A673 (cell line): ENCODE measurements at regions of chr5 and their contacts with region 1.

Region 1: GRCh38 chr5:9361835-9362234 is 184.0 kb downstream of the SEMA5A start:
- DNase-seq: peak; percentile 65
- H3K4me3 ChIP-seq: no peak overlapping the region
- H3K27ac ChIP-seq: no peak overlapping the region
- H3K4me1 ChIP-seq: no peaks in the 10 kb centered on the region
- H3K27me3 ChIP-seq: no peaks in the 10 kb centered on the region
- CTCF ChIP-seq: peak; percentile 83

Region 2: GRCh38 chr5:8729437-8729836 is 632.4 kb before region 1 on chr5:
- CTCF ChIA-PET with region 1: no interaction called
- POLR2A ChIA-PET with region 1: no interaction called
- intact Hi-C with region 1: no loop called
- DNase-seq: no peak
- H3K4me3 ChIP-seq: no peak overlapping the region
- H3K27ac ChIP-seq: no peak overlapping the region
- H3K4me1 ChIP-seq: no peaks in the 10 kb centered on the region
- H3K27me3 ChIP-seq: no peaks in the 10 kb centered on the region
- CTCF ChIP-seq: no peak

Region 3: DNA sequence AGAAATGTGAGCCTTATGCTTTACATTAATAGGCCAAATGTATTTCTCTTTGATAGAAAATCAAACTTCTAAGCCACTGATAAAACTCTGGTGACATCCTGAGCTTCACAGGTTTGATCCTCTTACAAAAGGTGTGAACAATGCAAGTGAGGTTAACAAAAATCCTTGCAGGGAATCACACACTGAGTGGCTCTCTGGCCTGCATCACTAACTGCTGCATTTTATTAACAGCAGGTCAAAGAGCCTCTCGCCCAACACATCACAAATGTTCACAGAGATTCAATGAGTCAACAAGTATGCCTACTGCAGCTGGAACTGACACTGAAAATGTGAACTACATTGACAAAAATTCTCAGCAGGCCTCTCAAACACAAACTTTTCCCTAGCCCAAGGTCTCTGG is 61.7 kb after region 1 on chr5:
- CTCF ChIA-PET with region 1: no interaction called
- POLR2A ChIA-PET with region 1: no interaction called
- intact Hi-C with region 1: no loop called
- DNase-seq: no peak
- H3K4me3 ChIP-seq: no peak overlapping the region
- H3K27ac ChIP-seq: no peak overlapping the region
- H3K4me1 ChIP-seq: no peaks in the 10 kb centered on the region
- H3K27me3 ChIP-seq: no peaks in the 10 kb centered on the region
- CTCF ChIP-seq: no peak

Region 4: GRCh38 chr5:9544502-9545135 is 182.8 kb after region 1 on chr5:
- CTCF ChIA-PET with region 1: no interaction called
- POLR2A ChIA-PET with region 1: no interaction called
- intact Hi-C with region 1: loop called (anchors 5 kb)
- DNase-seq: peak; percentile 79
- H3K4me3 ChIP-seq: peak overlapping the region; percentile 42
- H3K27ac ChIP-seq: no peak overlapping the region
- H3K4me1 ChIP-seq: peaks cover 11% of the 10 kb centered on the region
- H3K27me3 ChIP-seq: peaks cover 28% of the 10 kb centered on the region
- CTCF ChIP-seq: peak; percentile 96

Region 5: DNA sequence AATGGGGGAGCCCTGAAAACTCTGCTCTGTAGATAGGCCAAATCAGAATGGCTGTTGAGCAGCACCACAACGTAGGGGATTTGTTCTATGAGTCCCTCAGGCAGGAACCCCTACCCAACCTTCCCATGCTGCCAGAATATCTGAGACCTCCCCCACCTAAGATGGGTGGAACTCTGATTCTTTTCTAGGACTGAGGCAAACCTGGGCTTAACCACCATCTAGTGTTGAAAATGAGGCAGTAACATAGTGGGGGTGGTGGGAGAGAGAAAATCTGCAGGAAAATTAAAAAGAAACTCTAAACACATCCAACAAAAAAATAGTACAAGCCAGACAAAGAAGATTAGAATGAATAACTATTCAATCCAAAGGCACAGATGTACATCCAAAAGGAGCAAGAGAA is 659.4 kb after region 1 on chr5:
- CTCF ChIA-PET with region 1: no interaction called
- POLR2A ChIA-PET with region 1: no interaction called
- intact Hi-C with region 1: loop called (anchors 10 kb)
- DNase-seq: no peak
- H3K4me3 ChIP-seq: no peak overlapping the region
- H3K27ac ChIP-seq: no peak overlapping the region
- H3K4me1 ChIP-seq: no peaks in the 10 kb centered on the region
- H3K27me3 ChIP-seq: no peaks in the 10 kb centered on the region
- CTCF ChIP-seq: no peak